ENCODE measurements at regions of chr12 and their contacts with region 1.

Region 1: GRCh38 chr12:70719672-70720420 is 82.6 kb upstream of the PTPRB start:
- DNase-seq: no peak
- H3K4me3 ChIP-seq: peak overlapping the region in 1 of 4 donors; percentile 8
- H3K27ac ChIP-seq: peak overlapping the region in 3 of 4 donors; percentile 5 to 47 (median 31)
- H3K4me1 ChIP-seq: no peaks in the 10 kb centered on the region
- H3K27me3 ChIP-seq: peaks cover 0 to 6% (median under 1%) of the 10 kb centered on the region in 4 donors
- CTCF ChIP-seq: peak; percentile 33 to 73 (median 68)
- POLR2A ChIP-seq: no peak

Region 2: GRCh38 chr12:69880571-69880970 is 839.3 kb before region 1 on chr12:
- intact Hi-C with region 1: loop called (anchors 10 kb)
- DNase-seq: no peak
- H3K4me3 ChIP-seq: no peak overlapping the region
- H3K27ac ChIP-seq: no peak overlapping the region
- H3K4me1 ChIP-seq: peaks cover 0 to 5% (median 0%) of the 10 kb centered on the region in 3 donors
- H3K27me3 ChIP-seq: peaks cover 0 to 16% (median 0%) of the 10 kb centered on the region in 4 donors
- CTCF ChIP-seq: no peak
- POLR2A ChIP-seq: no peak

Region 3: DNA sequence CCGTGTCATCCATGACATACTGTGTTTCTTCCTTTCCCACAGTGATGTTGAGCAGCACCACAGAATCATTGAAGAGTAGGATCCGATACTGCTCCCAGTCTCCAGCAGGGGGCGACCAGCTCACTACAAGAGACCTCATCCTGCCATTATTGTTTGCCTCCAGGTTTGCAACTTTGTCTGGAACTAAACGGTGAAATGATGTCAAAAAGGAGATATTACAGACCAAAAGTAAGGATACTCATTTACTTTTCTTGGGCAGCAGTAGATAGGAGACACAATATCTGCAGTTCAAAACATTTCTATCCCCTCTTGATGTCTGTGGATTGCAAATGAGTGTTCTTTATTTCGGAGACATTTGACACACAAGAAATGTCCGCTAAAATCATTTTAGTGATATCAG is 129.8 kb before region 1 on chr12:
- intact Hi-C with region 1: loop called (anchors 5 kb)
- DNase-seq: no peak
- H3K4me3 ChIP-seq: no peak overlapping the region
- H3K27ac ChIP-seq: no peak overlapping the region
- H3K4me1 ChIP-seq: no peaks in the 10 kb centered on the region
- H3K27me3 ChIP-seq: peaks cover 0 to 14% (median 0%) of the 10 kb centered on the region in 4 donors
- CTCF ChIP-seq: peak; percentile 45 to 79 (median 70)
- POLR2A ChIP-seq: no peak

Region 4: GRCh38 chr12:71315328-71315985 is 595.6 kb after region 1 on chr12:
- intact Hi-C with region 1: no loop called
- DNase-seq: no peak
- H3K4me3 ChIP-seq: no peak overlapping the region
- H3K27ac ChIP-seq: peak overlapping the region; percentile 57 to 76 (median 74)
- H3K4me1 ChIP-seq: peaks cover 0 to 47% (median 4%) of the 10 kb centered on the region in 3 donors
- H3K27me3 ChIP-seq: no peaks in the 10 kb centered on the region
- CTCF ChIP-seq: no peak
- POLR2A ChIP-seq: no peak